IMR-90 (cell line): ENCODE measurements at regions of chr7 and their contacts with region 1.

Region 1: DNA sequence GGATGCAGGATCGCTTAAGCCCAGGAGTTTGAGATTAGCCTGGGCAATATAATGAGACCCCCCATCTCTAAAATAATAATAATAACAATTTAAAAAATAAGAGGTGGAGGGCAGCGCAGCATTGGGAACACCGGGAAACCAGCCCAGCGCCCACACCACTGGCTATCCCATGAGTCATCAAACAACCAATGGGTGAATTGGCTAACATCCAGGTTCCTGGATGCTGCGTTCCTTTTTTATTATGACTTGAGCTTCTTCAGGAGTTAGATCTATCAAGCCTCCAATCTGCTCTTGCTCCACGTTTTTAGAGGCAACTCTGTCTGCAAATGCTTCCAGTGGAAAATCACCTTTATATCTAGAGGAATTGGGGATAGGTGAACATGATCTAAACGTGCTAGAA is 10.0 kb upstream of the LRRC4 start:
- DNase-seq: peak; percentile 76
- ATAC-seq: peak; percentile 35; the same call in 1 of the 2 replicates
- H3K4me3 ChIP-seq: no peak overlapping the region
- H3K27ac ChIP-seq: no peak overlapping the region
- H3K4me1 ChIP-seq: peaks cover 4% of the 10 kb centered on the region; the same call in 1 of the 2 replicates
- H3K27me3 ChIP-seq: no peaks in the 10 kb centered on the region
- CTCF ChIP-seq: no peak
- POLR2A ChIP-seq: no peak
- RAD21 ChIP-seq: no peak

Region 2: GRCh38 chr7:128129224-128129864 is 88.1 kb after region 1 on chr7:
- CTCF ChIA-PET with region 1: no interaction called
- POLR2A ChIA-PET with region 1: no interaction called
- dilution Hi-C with region 1: no loop called
- in situ Hi-C with region 1: no loop called
- intact Hi-C with region 1: no loop called
- DNase-seq: no peak
- ATAC-seq: no peak
- H3K4me3 ChIP-seq: no peak overlapping the region
- H3K27ac ChIP-seq: no peak overlapping the region
- H3K4me1 ChIP-seq: no peaks in the 10 kb centered on the region
- H3K27me3 ChIP-seq: peaks cover 57% of the 10 kb centered on the region
- CTCF ChIP-seq: no peak
- POLR2A ChIP-seq: no peak
- RAD21 ChIP-seq: no peak

Region 3: DNA sequence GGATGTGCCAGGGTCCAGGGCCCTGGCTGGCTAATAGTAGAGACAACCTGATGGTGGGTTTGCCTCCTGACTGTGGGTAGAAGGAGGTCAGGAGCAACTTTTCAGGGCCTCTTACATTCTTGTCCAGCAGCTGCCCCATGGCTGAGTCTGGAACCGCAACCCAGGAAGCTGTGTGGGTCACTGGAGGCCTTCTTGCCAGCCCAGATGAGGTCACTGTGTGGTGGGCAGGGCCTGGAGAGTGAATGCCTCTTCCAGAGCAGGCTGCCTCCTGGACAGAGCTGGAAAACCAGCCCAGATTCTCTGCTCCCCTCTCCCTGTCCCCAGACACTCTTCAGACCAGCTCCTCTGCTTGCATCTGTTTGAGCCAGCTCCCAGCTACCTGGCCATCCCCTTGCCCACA is 156.4 kb after region 1 on chr7:
- CTCF ChIA-PET with region 1: no interaction called
- POLR2A ChIA-PET with region 1: no interaction called
- dilution Hi-C with region 1: no loop called
- in situ Hi-C with region 1: loop called (anchors 10 kb)
- intact Hi-C with region 1: no loop called
- DNase-seq: peak; percentile 8
- ATAC-seq: peak; percentile 49
- H3K4me3 ChIP-seq: no peak overlapping the region
- H3K27ac ChIP-seq: no peak overlapping the region
- H3K4me1 ChIP-seq: no peaks in the 10 kb centered on the region
- H3K27me3 ChIP-seq: peaks cover 45% of the 10 kb centered on the region
- CTCF ChIP-seq: no peak
- POLR2A ChIP-seq: no peak
- RAD21 ChIP-seq: no peak